WTC11 (cell line): ENCODE measurements at regions of chr2 and their contacts with region 1.

Region 1: DNA sequence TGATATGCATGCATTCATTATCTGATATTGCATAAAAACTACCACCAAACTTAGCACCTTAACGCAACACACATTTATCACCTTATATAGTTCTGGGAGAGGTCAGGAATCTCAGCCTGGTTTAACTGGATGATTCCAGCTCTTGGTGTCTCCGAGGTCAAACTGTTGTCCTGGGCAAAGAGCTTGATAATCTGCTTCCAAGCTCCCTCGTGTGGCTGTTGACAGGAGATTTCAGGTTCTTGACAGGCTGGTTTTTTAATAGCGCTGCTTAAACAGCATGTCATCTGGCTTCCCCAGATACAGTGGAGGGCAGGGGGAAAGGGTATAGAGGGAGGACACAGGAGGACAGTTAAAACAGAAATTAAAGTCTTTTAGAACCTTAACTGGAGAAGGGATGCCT is 785.0 kb downstream of the CNTNAP5 start:
- DNase-seq: peak; percentile 42
- ATAC-seq: peak; percentile 90
- H3K4me3 Mint-ChIP-seq: no peak overlapping the region
- H3K27ac Mint-ChIP-seq: no peak overlapping the region
- H3K4me1 Mint-ChIP-seq: peaks cover 5% of the 10 kb centered on the region
- H3K27me3 Mint-ChIP-seq: no peaks in the 10 kb centered on the region
- CTCF ChIP-seq: no peak

Region 2: GRCh38 chr2:124027182-124027581 is 783.0 kb before region 1 on chr2:
- CTCF ChIA-PET with region 1: interaction called, 13 read pairs
- POLR2A ChIA-PET with region 1: no interaction called
- DNase-seq: peak; percentile 31
- ATAC-seq: peak; percentile 62
- H3K4me3 Mint-ChIP-seq: no peak overlapping the region
- H3K27ac Mint-ChIP-seq: no peak overlapping the region
- H3K4me1 Mint-ChIP-seq: peaks cover 17% of the 10 kb centered on the region
- H3K27me3 Mint-ChIP-seq: peaks cover 50% of the 10 kb centered on the region
- CTCF ChIP-seq: no peak